Mammary epithelial cell (primary cell): ENCODE measurements at regions of chr15 and their contacts with region 1.

Region 1: DNA sequence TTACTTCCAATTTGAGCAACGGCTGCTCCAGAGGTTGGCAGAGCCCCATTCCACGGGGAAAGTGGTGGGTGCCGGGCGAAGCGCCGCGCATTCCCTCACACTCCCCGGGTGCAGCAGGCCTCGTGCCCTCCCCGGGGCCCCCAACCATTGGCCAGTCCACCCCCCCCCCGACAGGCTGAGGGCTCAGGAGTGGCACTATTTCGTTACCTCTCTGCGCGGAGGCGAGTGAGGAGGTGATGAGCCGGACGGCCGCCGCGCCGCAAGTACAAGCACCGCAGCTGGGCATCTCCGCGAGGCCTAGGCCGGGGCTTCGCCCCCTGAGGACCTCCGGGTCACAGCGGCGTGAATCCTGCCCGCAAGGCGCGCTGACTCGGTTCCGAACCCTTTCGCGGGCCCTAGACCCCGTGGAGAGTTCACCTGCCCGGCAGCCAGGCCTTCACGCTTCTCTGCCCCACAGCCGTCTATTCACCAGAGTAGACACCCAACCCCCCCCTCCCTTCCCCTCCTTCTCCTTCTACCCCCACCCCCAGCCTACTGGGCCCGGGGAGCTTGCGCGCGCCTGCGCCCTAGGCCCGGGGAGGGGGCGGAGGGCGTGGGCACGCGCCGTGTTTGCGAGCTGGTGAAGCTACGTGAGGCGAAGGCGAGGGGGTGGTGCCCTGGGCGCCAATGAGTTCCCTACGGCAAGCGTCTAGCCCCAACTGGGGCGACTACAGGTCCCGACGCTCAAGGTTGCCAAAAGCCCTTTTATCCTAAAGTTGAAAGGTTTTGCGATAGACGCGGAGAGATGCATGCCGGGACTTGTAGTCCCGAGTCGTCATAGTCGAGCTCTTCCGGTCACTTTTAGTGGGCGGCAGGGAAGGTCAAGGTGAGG is at the start of gene CLPX:
- DNase-seq: peak; percentile 90
- H3K4me3 ChIP-seq: peak within 1 kb of the TSS; percentile 63 to 87 (median 66)
- H3K27ac ChIP-seq: peak within 1 kb of the TSS; percentile 73
- H3K4me1 ChIP-seq: no peaks in the 10 kb centered on the region
- H3K27me3 ChIP-seq: no peaks in the 10 kb centered on the region
- CTCF ChIP-seq: peak in 1 of 2 donors; percentile 3
- total RNA-seq, gene CLPX: 28.3 to 42.4 TPM

Region 2: GRCh38 chr15:65133548-65134200 is 51.4 kb before region 1 on chr15 and contains the start of gene PDCD7:
- CTCF ChIA-PET with region 1: no interaction called
- dilution Hi-C with region 1: no loop called
- in situ Hi-C with region 1: no loop called
- intact Hi-C with region 1: loop called (anchors 1 kb)
- DNase-seq: peak; percentile 85
- H3K4me3 ChIP-seq: peak within 1 kb of the TSS; percentile 50 to 78 (median 73)
- H3K27ac ChIP-seq: peak within 1 kb of the TSS; percentile 73
- H3K4me1 ChIP-seq: peaks cover 8% of the 10 kb centered on the region
- H3K27me3 ChIP-seq: no peaks in the 10 kb centered on the region
- CTCF ChIP-seq: no peak
- total RNA-seq, gene PDCD7: 16.7 to 22.5 TPM

Region 3: DNA sequence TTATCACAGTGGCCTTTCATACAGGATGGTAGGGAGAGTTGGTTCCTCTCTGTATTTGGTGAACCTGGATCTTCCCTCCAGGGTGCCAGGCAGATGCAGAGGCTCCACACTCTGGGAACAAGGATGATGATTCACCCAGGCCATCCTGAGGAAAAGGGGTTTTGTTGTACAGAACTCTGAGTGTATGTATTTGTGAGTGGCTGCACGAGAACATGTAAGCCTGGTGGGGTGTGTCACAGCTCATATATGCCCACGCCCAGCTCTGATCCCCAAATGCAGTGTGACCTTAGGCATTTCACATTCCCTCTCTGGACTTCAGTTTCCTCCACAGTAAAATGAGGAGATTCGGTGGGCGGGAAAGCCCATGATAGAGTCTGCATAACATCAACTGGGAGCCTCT is 37.8 kb after region 1 on chr15:
- CTCF ChIA-PET with region 1: no interaction called
- dilution Hi-C with region 1: no loop called
- in situ Hi-C with region 1: no loop called
- intact Hi-C with region 1: no loop called
- DNase-seq: no peak
- H3K4me3 ChIP-seq: no peak overlapping the region
- H3K27ac ChIP-seq: no peak overlapping the region
- H3K4me1 ChIP-seq: peaks cover 4% of the 10 kb centered on the region
- H3K27me3 ChIP-seq: peaks cover 2% of the 10 kb centered on the region
- CTCF ChIP-seq: no peak

Region 4: DNA sequence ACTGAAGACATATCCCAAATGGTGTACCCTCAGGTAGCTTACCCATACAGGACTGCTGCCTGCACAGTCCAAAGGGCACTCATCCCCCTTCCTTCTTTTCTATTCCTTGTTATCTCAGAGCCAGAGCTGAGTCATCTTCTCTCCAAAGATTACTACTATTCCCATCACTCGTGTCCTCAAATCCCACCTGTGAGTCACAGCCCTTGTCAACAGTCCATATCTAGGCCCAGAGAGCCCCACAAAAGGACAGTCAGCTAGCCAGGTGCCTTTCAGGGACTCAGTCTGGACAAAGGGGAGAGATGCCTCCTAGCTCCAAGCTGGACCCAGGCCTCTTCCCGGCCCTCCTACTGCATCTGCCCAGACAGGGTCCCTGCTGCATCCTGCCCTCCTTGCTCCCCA is 90.6 kb after region 1 on chr15:
- CTCF ChIA-PET with region 1: no interaction called
- dilution Hi-C with region 1: no loop called
- in situ Hi-C with region 1: loop called (anchors 5 to 10 kb)
- intact Hi-C with region 1: loop called (anchors 1 kb)
- DNase-seq: no peak
- H3K4me3 ChIP-seq: no peak overlapping the region
- H3K27ac ChIP-seq: no peak overlapping the region
- H3K4me1 ChIP-seq: no peaks in the 10 kb centered on the region
- H3K27me3 ChIP-seq: no peaks in the 10 kb centered on the region
- CTCF ChIP-seq: no peak

Region 5: DNA sequence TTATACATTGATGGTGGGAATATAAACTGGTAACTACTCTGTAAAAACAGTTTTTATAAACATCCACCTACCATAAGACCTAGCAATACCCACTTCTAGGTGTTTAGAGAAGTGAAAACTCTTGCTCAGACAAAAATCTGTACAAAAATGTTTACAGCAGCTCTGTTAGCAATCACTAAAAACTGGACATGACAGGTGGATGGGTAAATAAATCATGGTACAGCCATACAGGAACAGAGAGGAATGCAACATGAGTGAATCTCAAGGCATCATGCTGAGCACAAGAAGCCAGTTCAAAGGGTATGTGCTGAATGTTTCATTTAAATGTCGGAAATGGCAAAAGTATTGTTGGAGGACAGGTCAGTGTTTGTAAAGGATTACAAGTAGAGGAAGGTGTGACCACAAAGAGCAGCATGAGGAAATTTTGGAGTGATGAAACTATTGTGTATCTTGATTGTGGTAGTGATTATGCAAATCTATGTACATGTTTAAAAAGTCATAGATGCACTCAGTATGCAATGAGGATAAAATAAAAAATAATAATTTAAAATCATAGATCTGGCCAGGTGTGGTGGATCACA is 107.9 kb after region 1 on chr15:
- CTCF ChIA-PET with region 1: interaction called, 3 read pairs
- dilution Hi-C with region 1: no loop called
- in situ Hi-C with region 1: no loop called
- intact Hi-C with region 1: loop called (anchors 1 kb)
- DNase-seq: no peak
- H3K4me3 ChIP-seq: no peak overlapping the region
- H3K27ac ChIP-seq: no peak overlapping the region
- H3K4me1 ChIP-seq: peaks cover 3% of the 10 kb centered on the region
- H3K27me3 ChIP-seq: no peaks in the 10 kb centered on the region
- CTCF ChIP-seq: no peak

Region 6: DNA sequence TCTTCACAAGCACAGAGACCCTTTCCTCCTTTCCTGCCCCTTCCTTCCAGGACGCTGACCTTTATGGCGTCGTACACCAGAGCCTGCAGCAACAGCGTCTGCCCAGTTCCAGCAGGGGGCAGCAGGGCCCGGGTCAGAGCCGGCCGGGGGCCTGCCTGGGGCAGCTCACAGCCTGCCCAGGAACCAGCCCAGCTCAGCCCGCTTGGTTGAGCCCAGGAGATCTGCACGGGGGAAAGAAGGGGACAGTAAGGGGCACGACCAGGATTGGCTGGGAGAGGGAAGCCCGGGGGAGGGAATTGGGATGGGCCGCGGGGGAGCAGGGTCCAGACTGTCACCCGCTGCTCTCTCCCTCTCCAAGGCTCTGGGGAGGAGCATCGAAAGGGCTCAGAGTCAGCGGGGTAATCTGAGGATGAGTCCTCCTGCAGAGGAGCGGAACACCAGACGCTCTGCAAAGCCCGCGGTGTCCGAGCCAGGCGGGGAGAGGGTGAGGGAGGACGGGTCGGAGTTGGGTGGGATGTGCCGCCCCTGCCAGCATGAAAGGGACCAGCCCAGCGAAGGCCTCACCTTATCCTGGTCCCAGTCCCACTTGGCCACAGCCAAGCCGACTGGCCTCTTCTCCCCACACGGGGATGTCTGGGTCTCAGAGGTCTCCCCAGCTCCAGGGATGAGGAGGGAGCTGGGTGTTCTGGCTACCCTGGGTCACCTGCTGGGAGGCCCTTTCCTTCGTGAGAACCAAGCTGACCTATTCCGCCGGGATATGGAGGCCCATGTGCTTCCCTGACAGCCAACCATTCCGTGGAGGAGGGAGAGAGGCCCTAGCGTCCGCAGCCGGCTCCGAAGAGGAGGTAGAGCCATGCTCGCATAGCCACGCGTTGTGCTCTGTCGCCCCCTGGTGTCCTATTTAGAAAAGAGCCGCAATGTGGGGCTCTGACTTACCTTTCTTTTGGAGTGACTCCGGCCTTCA is 200.1 kb after region 1 on chr15:
- CTCF ChIA-PET with region 1: no interaction called
- dilution Hi-C with region 1: no loop called
- in situ Hi-C with region 1: no loop called
- intact Hi-C with region 1: loop called (anchors 1 kb)
- DNase-seq: peak; percentile 73
- H3K4me3 ChIP-seq: peak overlapping the region in 2 of 3 experiments; percentile 22 to 30
- H3K27ac ChIP-seq: no peak overlapping the region
- H3K4me1 ChIP-seq: peaks cover 11% of the 10 kb centered on the region
- H3K27me3 ChIP-seq: peaks cover 4% of the 10 kb centered on the region
- CTCF ChIP-seq: peak; percentile 83 to 93